A549 (cell line): ENCODE measurements at regions of chr14 and their contacts with region 1.

Region 1: GRCh38 chr14:31543969-31544799 is 17.0 kb upstream of the NUBPL start:
- DNase-seq: peak in 1 of 2 experiments; percentile 36
- ATAC-seq: peak; percentile 92 to 93
- H3K4me3 ChIP-seq: no peak overlapping the region
- H3K27ac ChIP-seq: no peak overlapping the region
- H3K4me1 ChIP-seq: no peaks in the 10 kb centered on the region
- CTCF ChIP-seq: no peak
- EP300 ChIP-seq: no peak
- POLR2A ChIP-seq: no peak
- RAD21 ChIP-seq: peak; percentile 25 to 37; a peak in 2 of 5 replicates

Region 2: GRCh38 chr14:31556191-31556590 is 12.0 kb after region 1 on chr14:
- CTCF ChIA-PET with region 1: interaction called, 11 read pairs
- POLR2A ChIA-PET with region 1: no interaction called
- DNase-seq: no peak
- ATAC-seq: no peak
- H3K4me3 ChIP-seq: no peak overlapping the region
- H3K27ac ChIP-seq: no peak overlapping the region
- H3K4me1 ChIP-seq: no peaks in the 10 kb centered on the region
- CTCF ChIP-seq: no peak
- EP300 ChIP-seq: no peak
- POLR2A ChIP-seq: no peak
- RAD21 ChIP-seq: no peak

Region 3: GRCh38 chr14:31596342-31597095 is 52.3 kb after region 1 on chr14:
- CTCF ChIA-PET with region 1: no interaction called
- POLR2A ChIA-PET with region 1: interaction called, 11 read pairs
- DNase-seq: no peak
- ATAC-seq: no peak
- H3K4me3 ChIP-seq: no peak overlapping the region
- H3K27ac ChIP-seq: no peak overlapping the region
- H3K4me1 ChIP-seq: no peaks in the 10 kb centered on the region
- CTCF ChIP-seq: no peak
- EP300 ChIP-seq: no peak
- POLR2A ChIP-seq: no peak
- RAD21 ChIP-seq: no peak

Region 4: GRCh38 chr14:31880935-31881334 is 336.8 kb after region 1 on chr14:
- CTCF ChIA-PET with region 1: no interaction called
- POLR2A ChIA-PET with region 1: no interaction called
- DNase-seq: peak; percentile 8 to 46
- ATAC-seq: peak; percentile 69 to 91
- H3K4me3 ChIP-seq: no peak overlapping the region
- H3K27ac ChIP-seq: peak overlapping the region; percentile 31 to 41; a peak in 2 of 6 replicates
- H3K4me1 ChIP-seq: peaks cover 14% of the 10 kb centered on the region; the same call in 2 of the 3 replicates
- CTCF ChIP-seq: no peak
- EP300 ChIP-seq: no peak
- POLR2A ChIP-seq: no peak
- RAD21 ChIP-seq: no peak